Mammary epithelial cell (primary cell): ENCODE measurements at regions of chr17 and their contacts with region 1.

Region 1: GRCh38 chr17:66915204-66916096 is 49.1 kb upstream of the CACNG4 start:
- DNase-seq: peak; percentile 64
- H3K4me3 ChIP-seq: no peak overlapping the region
- H3K27ac ChIP-seq: no peak overlapping the region
- H3K4me1 ChIP-seq: peaks cover 6% of the 10 kb centered on the region
- H3K27me3 ChIP-seq: no peaks in the 10 kb centered on the region
- CTCF ChIP-seq: peak; percentile 74 to 86

Region 2: DNA sequence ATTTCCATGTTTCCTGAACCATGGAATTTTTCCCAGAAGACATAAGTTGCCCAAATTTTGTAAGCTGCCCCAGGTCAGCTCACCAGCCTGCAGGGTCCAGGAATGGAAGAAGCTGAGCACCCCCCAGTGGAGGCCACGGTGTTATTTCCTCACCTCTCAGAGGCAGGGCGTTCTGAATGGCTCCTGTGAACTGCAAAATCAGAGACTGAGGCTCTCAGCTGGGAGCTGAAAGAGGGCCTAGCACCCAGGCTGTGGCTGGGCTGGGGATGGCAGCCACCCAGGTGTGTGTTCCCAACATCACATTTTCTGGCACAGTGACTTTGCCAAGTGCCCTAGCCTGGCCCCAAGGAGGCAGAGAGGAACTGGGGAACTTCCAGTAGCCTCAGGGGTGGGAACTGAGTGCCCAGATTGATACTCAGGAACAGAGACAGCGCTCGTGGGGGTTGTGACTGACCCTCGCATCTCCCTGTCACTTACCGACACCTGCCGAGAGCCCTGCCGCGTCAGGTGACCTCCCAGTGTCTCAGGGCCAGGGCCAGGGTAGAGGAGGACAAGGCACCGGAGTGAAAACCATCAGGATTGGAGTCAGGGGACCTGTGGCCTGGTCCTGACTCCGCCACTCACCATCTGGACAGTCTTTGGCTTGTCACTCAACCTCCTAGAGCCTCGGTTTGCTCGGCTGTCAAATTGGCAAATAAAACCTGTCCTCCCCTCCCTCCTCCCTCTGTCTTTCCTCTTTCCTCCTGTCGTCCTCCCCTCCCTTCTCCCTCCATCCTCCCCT is 60.3 kb after region 1 on chr17:
- CTCF ChIA-PET with region 1: interaction called, 3 read pairs
- dilution Hi-C with region 1: no loop called
- in situ Hi-C with region 1: no loop called
- intact Hi-C with region 1: loop called (anchors 1 kb)
- DNase-seq: peak; percentile 25
- H3K4me3 ChIP-seq: no peak overlapping the region
- H3K27ac ChIP-seq: no peak overlapping the region
- H3K4me1 ChIP-seq: peaks cover 12% of the 10 kb centered on the region
- H3K27me3 ChIP-seq: no peaks in the 10 kb centered on the region
- CTCF ChIP-seq: peak; percentile 37 to 55

Region 3: GRCh38 chr17:66995944-66996343 is 80.5 kb after region 1 on chr17:
- CTCF ChIA-PET with region 1: no interaction called
- dilution Hi-C with region 1: loop called (anchors 5 kb)
- in situ Hi-C with region 1: no loop called
- intact Hi-C with region 1: no loop called
- DNase-seq: no peak
- H3K4me3 ChIP-seq: no peak overlapping the region
- H3K27ac ChIP-seq: no peak overlapping the region
- H3K4me1 ChIP-seq: no peaks in the 10 kb centered on the region
- H3K27me3 ChIP-seq: no peaks in the 10 kb centered on the region
- CTCF ChIP-seq: no peak

Region 4: GRCh38 chr17:67157732-67158639 is 242.5 kb after region 1 on chr17:
- CTCF ChIA-PET with region 1: no interaction called
- dilution Hi-C with region 1: no loop called
- in situ Hi-C with region 1: no loop called
- intact Hi-C with region 1: loop called (anchors 1 kb)
- DNase-seq: no peak
- H3K4me3 ChIP-seq: no peak overlapping the region
- H3K27ac ChIP-seq: no peak overlapping the region
- H3K4me1 ChIP-seq: no peaks in the 10 kb centered on the region
- H3K27me3 ChIP-seq: no peaks in the 10 kb centered on the region
- CTCF ChIP-seq: peak; percentile 24 to 46